AG04450 (cell line): ENCODE measurements at regions of chr6 and their contacts with region 1.

Region 1: GRCh38 chr6:159104163-159104925 is 59.6 kb upstream of the TAGAP start:
- DNase-seq: no peak
- H3K4me3 ChIP-seq: no peak overlapping the region
- H3K27ac ChIP-seq: no peak overlapping the region
- H3K27me3 ChIP-seq: peaks cover 22% of the 10 kb centered on the region
- CTCF ChIP-seq: peak; percentile 94

Region 2: DNA sequence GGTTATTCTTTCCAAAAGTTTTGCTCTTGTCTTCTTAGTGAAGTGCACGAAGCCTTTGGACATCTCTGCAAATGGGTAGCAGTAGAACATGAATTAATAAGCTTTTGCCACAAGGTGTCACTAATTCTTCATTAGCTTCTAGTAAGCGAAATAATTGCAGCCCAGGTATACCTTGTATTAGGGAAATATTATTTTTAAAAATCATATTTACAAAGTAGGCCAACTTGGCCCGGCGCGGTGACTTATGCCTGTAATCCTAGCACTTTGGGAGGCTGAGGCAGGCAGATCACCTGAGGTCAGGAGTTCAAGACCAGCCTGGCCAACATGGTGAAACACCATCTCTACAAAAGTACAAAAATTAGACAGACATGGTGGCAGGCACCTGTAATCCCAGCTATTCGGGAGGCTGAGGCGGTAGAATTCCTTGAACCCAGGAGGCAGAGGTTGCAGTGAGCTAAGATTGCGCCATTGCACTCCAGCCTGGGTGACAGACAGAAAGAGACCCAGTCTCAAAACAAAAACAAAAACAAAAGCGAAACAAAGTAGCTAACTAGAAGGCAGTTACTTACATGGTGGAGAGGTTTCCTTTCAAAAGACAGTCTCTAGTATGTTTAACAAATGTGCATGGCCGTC is 95.6 kb before region 1 on chr6:
- CTCF ChIA-PET with region 1: interaction called, 42 read pairs
- POLR2A ChIA-PET with region 1: interaction called, 5 read pairs
- DNase-seq: no peak
- H3K4me3 ChIP-seq: no peak overlapping the region
- H3K27ac ChIP-seq: no peak overlapping the region
- H3K27me3 ChIP-seq: no peaks in the 10 kb centered on the region
- CTCF ChIP-seq: peak; percentile 38

Region 3: DNA sequence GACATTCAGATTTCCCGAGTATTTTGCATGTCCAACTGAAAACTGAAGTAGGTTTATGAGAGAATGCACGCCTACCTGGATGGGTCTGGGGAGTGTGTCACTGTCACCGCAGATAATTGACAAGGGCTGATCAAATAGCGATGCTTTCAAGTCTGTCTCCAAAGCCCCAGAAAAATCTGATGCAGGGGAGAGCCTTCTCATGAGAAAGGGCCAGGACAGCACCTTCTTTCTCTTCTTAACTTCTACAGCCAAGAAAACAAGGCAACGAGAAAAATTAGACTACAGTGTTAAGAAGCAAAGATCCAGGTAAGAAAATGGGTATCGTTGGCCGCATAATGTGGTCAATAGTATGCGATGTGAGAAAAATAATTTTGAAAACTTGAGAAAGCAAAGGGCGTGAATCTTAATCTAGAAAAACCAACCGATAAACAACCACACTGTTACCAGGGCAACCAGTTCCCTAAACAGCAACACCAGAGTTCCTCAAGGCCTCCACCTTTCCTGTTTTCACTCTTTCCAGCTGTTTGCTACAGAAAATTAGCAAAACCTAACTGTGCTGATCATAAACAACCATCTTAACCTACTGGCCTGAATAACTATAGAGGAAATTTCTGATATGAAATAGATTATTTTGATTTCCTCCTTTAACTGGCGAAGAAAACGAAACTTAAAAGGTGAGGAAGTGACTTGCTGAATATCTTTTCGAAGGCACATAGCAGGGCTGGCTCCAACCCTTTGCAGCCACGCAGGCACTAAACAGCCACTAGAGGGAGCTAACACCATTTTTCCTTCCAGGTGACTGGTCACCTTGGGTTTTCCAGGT is 62.1 kb before region 1 on chr6:
- CTCF ChIA-PET with region 1: interaction called, 50 read pairs
- POLR2A ChIA-PET with region 1: no interaction called
- DNase-seq: peak; percentile 11
- H3K4me3 ChIP-seq: no peak overlapping the region
- H3K27ac ChIP-seq: no peak overlapping the region
- H3K27me3 ChIP-seq: peaks cover 14% of the 10 kb centered on the region
- CTCF ChIP-seq: peak; percentile 89

Region 4: GRCh38 chr6:159090530-159091480 is 13.5 kb before region 1 on chr6:
- CTCF ChIA-PET with region 1: interaction called, 20 read pairs
- POLR2A ChIA-PET with region 1: no interaction called
- DNase-seq: no peak
- H3K4me3 ChIP-seq: no peak overlapping the region
- H3K27ac ChIP-seq: no peak overlapping the region
- H3K27me3 ChIP-seq: peaks cover 5% of the 10 kb centered on the region
- CTCF ChIP-seq: no peak